AG04449 (cell line): ENCODE measurements at regions of chr11 and their contacts with region 1.

Region 1: DNA sequence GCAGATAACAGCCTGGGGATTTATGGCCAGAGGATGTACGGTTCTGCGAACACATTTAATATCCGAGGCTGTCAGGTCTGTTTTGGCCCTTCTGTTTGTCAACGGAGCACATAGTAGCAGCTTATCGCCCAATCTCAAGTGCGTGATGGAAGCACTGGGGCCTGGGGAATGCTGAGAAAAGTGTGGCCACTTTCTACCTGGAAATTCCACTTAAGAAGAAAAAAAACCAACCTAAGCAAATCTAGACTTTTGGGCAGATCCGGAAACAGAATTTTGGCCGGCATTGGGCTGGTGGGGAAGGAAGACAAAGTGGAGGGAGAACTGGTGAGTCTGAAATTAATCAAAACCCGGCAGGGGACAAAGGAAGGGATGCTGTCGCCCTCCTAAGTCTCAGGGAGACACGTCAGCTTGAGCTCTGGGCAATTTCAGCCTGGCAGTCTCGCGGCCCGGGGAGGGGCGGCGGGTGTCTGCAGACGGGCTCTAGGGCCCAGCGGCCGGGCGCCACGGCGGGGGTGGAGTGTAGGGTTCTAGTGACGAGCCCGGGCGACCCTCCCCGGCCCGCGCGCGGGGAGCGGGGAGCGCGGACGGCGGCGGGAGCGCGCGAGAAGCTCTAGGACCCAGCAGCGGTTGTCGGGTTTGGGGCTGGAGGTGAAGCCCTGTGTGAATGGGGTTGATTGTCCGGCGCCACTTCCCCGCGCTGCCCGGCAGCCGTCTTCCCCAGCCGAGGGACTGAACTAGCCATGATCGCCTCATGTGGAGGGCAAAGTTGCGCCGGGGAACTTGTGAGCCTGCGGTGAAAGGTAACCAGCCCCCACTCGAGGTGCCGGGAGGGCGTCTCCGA is at the start of gene AMOTL1:
- DNase-seq: no peak
- H3K4me3 ChIP-seq: peak within 1 kb of the TSS; percentile 85
- CTCF ChIP-seq: no peak

Region 2: GRCh38 chr11:94376841-94377240 is 391.1 kb before region 1 on chr11:
- CTCF ChIA-PET with region 1: no interaction called
- POLR2A ChIA-PET with region 1: no interaction called
- DNase-seq: no peak
- H3K4me3 ChIP-seq: no peak overlapping the region
- CTCF ChIP-seq: no peak

Region 3: DNA sequence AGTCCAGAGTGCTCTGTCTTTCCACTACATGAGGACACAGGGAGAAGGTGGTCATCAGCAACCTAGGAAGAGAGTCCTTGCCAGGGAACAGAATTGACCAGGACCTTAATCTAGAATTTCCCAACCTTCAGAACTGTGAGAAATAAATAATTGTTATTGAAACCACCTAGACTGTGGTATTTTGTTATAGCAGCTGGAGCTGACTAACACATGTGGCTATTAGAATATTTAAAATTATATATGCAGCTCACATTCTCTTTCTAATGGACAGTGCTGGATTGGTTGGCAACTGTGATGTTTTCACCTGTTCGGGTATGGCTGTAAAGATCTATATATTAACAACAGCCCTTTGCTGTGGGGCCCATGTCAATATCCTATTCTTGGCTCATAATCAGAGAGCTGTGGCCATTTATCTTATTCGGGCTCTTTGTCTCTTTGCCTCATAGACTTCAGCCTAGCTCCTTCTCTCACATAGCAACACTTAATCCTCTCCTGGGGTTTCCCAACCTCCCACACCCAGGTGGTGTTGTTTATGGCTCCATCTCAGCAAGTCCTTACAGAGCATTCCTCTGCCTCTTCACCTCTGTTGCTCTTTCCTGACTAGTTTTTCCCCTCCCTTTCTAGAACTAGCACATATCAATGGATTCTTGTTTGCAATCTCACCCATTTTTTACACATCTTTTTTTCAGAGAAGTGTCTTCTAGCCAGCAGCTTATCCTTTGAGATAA is 46.3 kb before region 1 on chr11:
- CTCF ChIA-PET with region 1: no interaction called
- POLR2A ChIA-PET with region 1: no interaction called
- DNase-seq: no peak
- H3K4me3 ChIP-seq: no peak overlapping the region
- CTCF ChIP-seq: no peak

Region 4: GRCh38 chr11:94731880-94732601 is 35.9 kb before region 1 on chr11:
- CTCF ChIA-PET with region 1: no interaction called
- POLR2A ChIA-PET with region 1: no interaction called
- DNase-seq: no peak
- H3K4me3 ChIP-seq: no peak overlapping the region
- CTCF ChIP-seq: no peak

Region 5: DNA sequence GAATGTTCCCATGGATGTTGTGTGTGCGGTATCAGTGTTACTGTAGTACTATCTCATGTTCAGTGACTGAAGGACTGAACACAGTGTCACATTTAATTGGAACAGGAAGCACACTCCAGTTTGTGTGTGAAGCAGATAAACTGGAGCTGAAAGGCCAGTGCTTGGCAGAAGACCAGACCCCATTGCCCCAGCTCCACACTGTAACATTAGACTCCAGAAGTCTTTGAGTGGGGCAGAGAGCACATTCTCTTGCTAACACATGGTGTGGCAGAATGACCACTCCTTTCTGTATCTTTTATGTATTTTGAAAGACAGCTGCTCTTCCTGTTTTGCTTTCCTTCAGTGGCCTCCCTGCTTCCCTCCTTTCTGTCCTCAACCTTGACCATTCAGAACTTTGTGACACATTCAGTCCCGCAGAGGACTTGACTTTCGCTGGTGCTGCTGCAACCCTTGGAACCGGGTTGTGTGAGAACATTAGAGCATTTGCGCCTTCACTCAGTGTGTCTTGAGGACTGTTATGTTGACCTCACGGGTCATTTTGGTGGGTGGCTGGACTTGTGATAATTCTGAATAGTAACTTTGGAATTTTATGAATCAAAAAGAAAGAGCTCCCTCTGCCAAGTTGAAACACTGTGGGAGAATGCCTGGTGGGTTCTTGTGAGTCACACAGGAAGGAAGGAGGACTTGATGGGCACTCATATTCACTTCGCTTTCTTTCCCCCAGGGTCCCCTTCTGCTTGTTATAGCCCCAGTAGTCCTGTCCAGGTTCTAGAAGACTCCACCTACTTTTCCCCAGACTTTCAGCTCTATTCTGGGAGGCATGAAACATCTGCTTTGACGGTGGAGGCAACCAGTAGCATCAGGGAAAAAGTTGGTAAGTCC is 26.5 kb after region 1 on chr11:
- CTCF ChIA-PET with region 1: interaction called, 4 read pairs
- POLR2A ChIA-PET with region 1: interaction called, 10 read pairs
- DNase-seq: peak; percentile 91
- H3K4me3 ChIP-seq: peak overlapping the region; percentile 41
- CTCF ChIP-seq: no peak

Region 6: GRCh38 chr11:95014184-95014821 is 246.3 kb after region 1 on chr11:
- CTCF ChIA-PET with region 1: no interaction called
- POLR2A ChIA-PET with region 1: no interaction called
- DNase-seq: no peak
- H3K4me3 ChIP-seq: no peak overlapping the region
- CTCF ChIP-seq: no peak